ENCODE measurements at regions of chr11 and their contacts with region 1.

Region 1: GRCh38 chr11:110230377-110230776 is 66.0 kb downstream of the RDX start:
- DNase-seq: no peak
- H3K4me3 ChIP-seq: no peak overlapping the region
- H3K27ac ChIP-seq: no peak overlapping the region
- H3K4me1 ChIP-seq: peaks cover 0 to 5% (median 0%) of the 10 kb centered on the region in 4 donors
- H3K27me3 ChIP-seq: no peaks in the 10 kb centered on the region
- CTCF ChIP-seq: no peak
- EP300 ChIP-seq: no peak
- POLR2A ChIP-seq: no peak

Region 2: GRCh38 chr11:112086422-112087191 is 1856.2 kb after region 1 on chr11 and contains the starts of genes SDHD and TIMM8B:
- in situ Hi-C with region 1: no loop called
- intact Hi-C with region 1: loop called (anchors 5 kb)
- DNase-seq: peak; percentile 96
- H3K4me3 ChIP-seq: peak within 1 kb of the TSS; percentile 65 to 83 (median 74)
- H3K27ac ChIP-seq: peak within 1 kb of the TSS; percentile 80 to 84 (median 84)
- H3K4me1 ChIP-seq: peaks cover 22 to 36% (median 24%) of the 10 kb centered on the region in 4 donors
- H3K27me3 ChIP-seq: no peaks in the 10 kb centered on the region
- CTCF ChIP-seq: peak in 4 of 5 experiments; percentile 22 to 68 (median 36)
- EP300 ChIP-seq: no peak
- POLR2A ChIP-seq: peak; percentile 79
- total RNA-seq, gene SDHD: 30.3 to 268 (median 145) TPM
- total RNA-seq, gene TIMM8B: 26.2 to 58.9 (median 40.6) TPM